ENCODE measurements at regions of chr2 and their contacts with region 1.

Region 1: DNA sequence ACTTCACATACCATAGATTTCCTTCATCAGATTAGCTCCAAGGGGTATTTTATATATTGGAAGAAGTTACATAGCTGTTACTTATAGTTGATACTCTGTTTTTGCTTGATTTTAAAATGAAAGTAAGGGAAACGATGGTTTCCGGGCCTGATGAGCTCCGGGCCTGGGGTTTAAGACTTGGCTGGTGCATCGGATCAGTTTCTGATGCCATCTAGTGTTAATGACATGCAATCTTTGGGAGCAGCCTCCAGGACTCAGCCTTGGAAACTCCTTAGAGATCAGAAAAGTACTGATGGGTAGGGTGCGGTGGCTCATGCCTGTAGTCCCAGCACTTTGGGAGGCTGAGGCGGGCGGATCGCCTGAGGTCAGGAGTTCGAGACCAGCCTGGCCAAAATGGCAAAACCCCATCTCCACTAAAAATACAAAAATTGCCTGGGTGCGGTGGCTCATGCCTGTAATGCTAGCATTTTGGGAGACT is 47.1 kb upstream of the CNOT11 start:
- DNase-seq: peak; percentile 67
- ATAC-seq: peak; percentile 97
- H3K4me3 Mint-ChIP-seq: peak overlapping the region; percentile 53
- H3K27ac Mint-ChIP-seq: peak overlapping the region; percentile 52
- H3K4me1 Mint-ChIP-seq: peaks cover 8% of the 10 kb centered on the region
- H3K27me3 Mint-ChIP-seq: peaks cover 4% of the 10 kb centered on the region

Region 2: GRCh38 chr2:100924520-100925451 is 280.8 kb before region 1 on chr2:
- CTCF ChIA-PET with region 1: no interaction called
- DNase-seq: peak; percentile 66
- ATAC-seq: peak; percentile 92
- H3K4me3 Mint-ChIP-seq: peak overlapping the region; percentile 37
- H3K27ac Mint-ChIP-seq: peak overlapping the region; percentile 65
- H3K4me1 Mint-ChIP-seq: peaks cover 15% of the 10 kb centered on the region
- H3K27me3 Mint-ChIP-seq: peaks cover 2% of the 10 kb centered on the region

Region 3: GRCh38 chr2:101151141-101151858 is 54.3 kb before region 1 on chr2 and contains the start of gene TBC1D8:
- CTCF ChIA-PET with region 1: interaction called, 10 read pairs
- DNase-seq: peak; percentile 64
- ATAC-seq: peak; percentile 94
- H3K4me3 Mint-ChIP-seq: peak within 1 kb of the TSS; percentile 70
- H3K27ac Mint-ChIP-seq: no peak within 1 kb of the TSS
- H3K4me1 Mint-ChIP-seq: peaks cover 14% of the 10 kb centered on the region
- H3K27me3 Mint-ChIP-seq: peaks cover 73% of the 10 kb centered on the region
- total RNA-seq, gene TBC1D8: 0.12 to 0.45 TPM

Region 4: DNA sequence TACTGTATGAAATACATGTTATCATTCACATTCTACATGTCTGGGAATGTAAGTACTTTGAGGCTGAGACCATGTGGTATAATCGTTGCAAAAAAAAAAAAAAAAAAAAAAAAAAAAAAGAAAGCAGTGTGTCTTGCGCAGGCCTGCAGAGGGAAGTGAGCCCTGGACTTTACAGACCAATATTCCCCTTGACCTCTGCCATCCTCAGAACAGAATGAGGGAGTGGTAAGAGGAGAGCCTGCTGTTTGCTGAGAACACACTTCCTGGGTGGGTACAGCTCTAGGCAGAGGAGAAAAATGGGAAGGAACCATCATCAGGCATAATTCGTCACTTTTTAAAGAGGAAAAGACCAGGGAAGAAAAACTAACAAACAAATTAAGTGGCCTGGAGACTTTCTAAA is 25.6 kb before region 1 on chr2:
- CTCF ChIA-PET with region 1: no interaction called
- DNase-seq: no peak
- ATAC-seq: no peak
- H3K4me3 Mint-ChIP-seq: no peak overlapping the region
- H3K27ac Mint-ChIP-seq: no peak overlapping the region
- H3K4me1 Mint-ChIP-seq: no peaks in the 10 kb centered on the region
- H3K27me3 Mint-ChIP-seq: peaks cover 3% of the 10 kb centered on the region

Region 5: GRCh38 chr2:101223814-101224231 is 18.3 kb after region 1 on chr2:
- CTCF ChIA-PET with region 1: interaction called, 12 read pairs
- DNase-seq: peak; percentile 87
- ATAC-seq: peak; percentile 93
- H3K4me3 Mint-ChIP-seq: no peak overlapping the region
- H3K27ac Mint-ChIP-seq: peak overlapping the region; percentile 67
- H3K4me1 Mint-ChIP-seq: peaks cover 19% of the 10 kb centered on the region
- H3K27me3 Mint-ChIP-seq: no peaks in the 10 kb centered on the region

Region 6: GRCh38 chr2:101325425-101325824 is 119.9 kb after region 1 on chr2:
- CTCF ChIA-PET with region 1: no interaction called
- DNase-seq: no peak
- ATAC-seq: no peak
- H3K4me3 Mint-ChIP-seq: no peak overlapping the region
- H3K27ac Mint-ChIP-seq: no peak overlapping the region
- H3K4me1 Mint-ChIP-seq: no peaks in the 10 kb centered on the region
- H3K27me3 Mint-ChIP-seq: no peaks in the 10 kb centered on the region